Transverse colon (tissue), 4 donors: ENCODE measurements at regions of chr15 and their contacts with region 1.

Region 1: GRCh38 chr15:92521624-92522008 is 127.9 kb downstream of the ST8SIA2 start:
- DNase-seq: peak; percentile 77
- H3K4me3 ChIP-seq: no peak overlapping the region
- H3K27ac ChIP-seq: no peak overlapping the region
- H3K4me1 ChIP-seq: no peaks in the 10 kb centered on the region
- H3K27me3 ChIP-seq: no peaks in the 10 kb centered on the region
- CTCF ChIP-seq: peak; percentile 64 to 82 (median 76)
- EP300 ChIP-seq: no peak
- POLR2A ChIP-seq: no peak

Region 2: GRCh38 chr15:92480381-92480780 is 41.2 kb before region 1 on chr15:
- in situ Hi-C with region 1: no loop called
- intact Hi-C with region 1: loop called (anchors 1 kb)
- DNase-seq: no peak
- H3K4me3 ChIP-seq: no peak overlapping the region
- H3K27ac ChIP-seq: no peak overlapping the region
- H3K4me1 ChIP-seq: no peaks in the 10 kb centered on the region
- H3K27me3 ChIP-seq: no peaks in the 10 kb centered on the region
- CTCF ChIP-seq: no peak
- EP300 ChIP-seq: no peak
- POLR2A ChIP-seq: no peak

Region 3: GRCh38 chr15:92683232-92683834 is 161.7 kb after region 1 on chr15:
- in situ Hi-C with region 1: loop called in 1 of 4 experiments (anchors 10 kb)
- intact Hi-C with region 1: no loop called
- DNase-seq: peak; percentile 41
- H3K4me3 ChIP-seq: no peak overlapping the region
- H3K27ac ChIP-seq: no peak overlapping the region
- H3K4me1 ChIP-seq: peaks cover 0 to 21% (median 1%) of the 10 kb centered on the region in 4 donors
- H3K27me3 ChIP-seq: no peaks in the 10 kb centered on the region
- CTCF ChIP-seq: peak; percentile 38 to 58 (median 48)
- EP300 ChIP-seq: no peak
- POLR2A ChIP-seq: no peak

Region 4: GRCh38 chr15:92709110-92709790 is 187.6 kb after region 1 on chr15:
- in situ Hi-C with region 1: loop called (anchors 10 to 25 kb)
- intact Hi-C with region 1: loop called (anchors 10 kb)
- DNase-seq: no peak
- H3K4me3 ChIP-seq: no peak overlapping the region
- H3K27ac ChIP-seq: no peak overlapping the region
- H3K4me1 ChIP-seq: peaks cover 0 to 4% (median 0%) of the 10 kb centered on the region in 4 donors
- H3K27me3 ChIP-seq: no peaks in the 10 kb centered on the region
- CTCF ChIP-seq: no peak
- EP300 ChIP-seq: no peak
- POLR2A ChIP-seq: no peak

Region 5: DNA sequence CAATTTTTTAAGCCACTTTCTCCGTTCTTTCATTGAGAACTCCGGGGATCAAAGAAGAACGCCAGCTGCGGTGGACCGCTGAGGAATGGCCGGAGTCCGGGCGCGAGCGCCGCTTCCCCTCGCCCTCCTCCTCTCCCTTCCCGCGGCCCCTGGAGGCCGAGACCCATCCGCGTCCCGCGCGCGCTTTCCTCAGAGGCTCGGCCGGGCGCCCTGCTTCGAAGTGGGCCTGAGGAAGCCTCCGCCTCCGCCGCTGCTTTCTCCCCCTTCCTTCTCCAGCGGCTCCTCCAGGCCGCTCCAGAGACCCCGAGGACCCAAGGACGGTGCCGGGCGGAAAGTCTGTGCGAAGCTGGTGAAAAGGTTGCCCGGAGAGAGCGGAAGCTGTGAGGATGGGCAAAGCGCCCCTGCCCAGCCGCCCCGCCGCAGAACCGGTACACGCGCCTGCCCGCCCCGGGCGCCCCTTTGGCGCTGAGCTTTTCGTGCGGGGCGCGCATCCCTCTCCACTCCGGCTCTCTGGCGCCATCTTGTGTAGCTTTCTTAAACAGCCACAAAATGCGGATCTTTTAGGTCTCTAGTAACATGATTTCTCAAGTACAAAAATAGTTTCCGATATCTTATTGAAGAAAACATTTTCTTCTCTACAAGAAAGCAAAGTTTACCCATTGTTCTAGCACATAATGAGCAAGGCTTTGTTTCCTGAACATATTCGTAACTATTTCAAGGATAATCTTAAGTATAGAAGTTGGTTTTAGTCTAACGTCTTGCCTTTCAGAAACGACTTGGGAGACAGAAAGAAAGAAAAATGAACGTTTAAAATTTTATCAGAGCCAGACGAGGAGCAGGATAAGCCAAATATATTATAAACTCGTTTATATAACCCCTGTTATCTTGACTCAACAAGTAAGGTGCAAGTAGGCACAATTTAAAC is 193.1 kb after region 1 on chr15:
- in situ Hi-C with region 1: loop called (anchors 10 to 25 kb)
- intact Hi-C with region 1: loop called (anchors 10 kb)
- DNase-seq: peak; percentile 65
- H3K4me3 ChIP-seq: peak overlapping the region; percentile 24 to 62 (median 36)
- H3K27ac ChIP-seq: peak overlapping the region; percentile 73 to 82 (median 76)
- H3K4me1 ChIP-seq: peaks cover 0 to 4% (median 2%) of the 10 kb centered on the region in 4 donors
- H3K27me3 ChIP-seq: no peaks in the 10 kb centered on the region
- CTCF ChIP-seq: peak; percentile 81 to 91 (median 83)
- EP300 ChIP-seq: no peak
- POLR2A ChIP-seq: peak; percentile 21